HepG2 (cell line): ENCODE measurements at regions of chr17 and their contacts with region 1.

Region 1: GRCh38 chr17:74659898-74660297 is 36.4 kb upstream of the CD300E start:
- DNase-seq: no peak
- ATAC-seq: no peak
- H3K4me3 ChIP-seq: no peak overlapping the region
- H3K27ac ChIP-seq: no peak overlapping the region
- H3K4me1 ChIP-seq: no peaks in the 10 kb centered on the region
- H3K27me3 ChIP-seq: peaks cover 0 to 20% of the 10 kb centered on the region in 2 experiments; a peak in 3 of 5 replicates
- CTCF ChIP-seq: no peak
- EP300 ChIP-seq: no peak
- POLR2A ChIP-seq: no peak
- RAD21 ChIP-seq: no peak

Region 2: GRCh38 chr17:74671031-74671771 is 11.3 kb after region 1 on chr17:
- CTCF ChIA-PET with region 1: no interaction called
- POLR2A ChIA-PET with region 1: no interaction called
- in situ Hi-C with region 1: no loop called
- intact Hi-C with region 1: no loop called
- DNase-seq: peak; percentile 67
- ATAC-seq: peak; percentile 98
- H3K4me3 ChIP-seq: no peak overlapping the region
- H3K27ac ChIP-seq: no peak overlapping the region
- H3K4me1 ChIP-seq: no peaks in the 10 kb centered on the region
- H3K27me3 ChIP-seq: peaks cover 0 to 5% of the 10 kb centered on the region in 2 experiments; a peak in 2 of 5 replicates
- CTCF ChIP-seq: peak; percentile 46
- EP300 ChIP-seq: peak in 1 of 2 experiments; percentile 33; a peak in 1 of 4 replicates
- POLR2A ChIP-seq: no peak
- RAD21 ChIP-seq: peak; percentile 74

Region 3: GRCh38 chr17:74736513-74737298 is 76.8 kb after region 1 on chr17 and contains the start of gene RAB37:
- CTCF ChIA-PET with region 1: interaction called, 22 read pairs
- POLR2A ChIA-PET with region 1: interaction called, 25 read pairs
- in situ Hi-C with region 1: loop called (anchors 5 kb)
- intact Hi-C with region 1: loop called (anchors 1 kb)
- DNase-seq: peak; percentile 99
- ATAC-seq: peak; percentile 82
- H3K4me3 ChIP-seq: peak within 1 kb of the TSS; percentile 39 to 78 (median 67)
- H3K27ac ChIP-seq: peak within 1 kb of the TSS; percentile 69
- H3K4me1 ChIP-seq: peaks cover 59% of the 10 kb centered on the region
- H3K27me3 ChIP-seq: peaks cover 8 to 37% of the 10 kb centered on the region in 2 experiments; a peak in 4 of 5 replicates
- CTCF ChIP-seq: peak; percentile 81
- EP300 ChIP-seq: peak; percentile 85 to 87
- POLR2A ChIP-seq: peak; percentile 42 to 71
- RAD21 ChIP-seq: peak; percentile 87
- total RNA-seq, gene RAB37: 0.91 and 1.1 TPM in 2 replicates

Region 4: GRCh38 chr17:74770498-74771318 is 110.8 kb after region 1 on chr17:
- CTCF ChIA-PET with region 1: interaction called, 10 read pairs
- POLR2A ChIA-PET with region 1: no interaction called
- in situ Hi-C with region 1: no loop called
- intact Hi-C with region 1: no loop called
- DNase-seq: peak; percentile 81
- ATAC-seq: peak; percentile 78
- H3K4me3 ChIP-seq: no peak overlapping the region
- H3K27ac ChIP-seq: peak overlapping the region; percentile 52
- H3K4me1 ChIP-seq: peaks cover 94% of the 10 kb centered on the region
- H3K27me3 ChIP-seq: no peaks in the 10 kb centered on the region; a peak in 1 of 5 replicates
- CTCF ChIP-seq: peak; percentile 99
- EP300 ChIP-seq: peak in 1 of 2 experiments; percentile 28; a peak in 1 of 4 replicates
- POLR2A ChIP-seq: peak in 1 of 2 experiments; percentile 55; a peak in 2 of 4 replicates
- RAD21 ChIP-seq: peak; percentile 99

Region 5: DNA sequence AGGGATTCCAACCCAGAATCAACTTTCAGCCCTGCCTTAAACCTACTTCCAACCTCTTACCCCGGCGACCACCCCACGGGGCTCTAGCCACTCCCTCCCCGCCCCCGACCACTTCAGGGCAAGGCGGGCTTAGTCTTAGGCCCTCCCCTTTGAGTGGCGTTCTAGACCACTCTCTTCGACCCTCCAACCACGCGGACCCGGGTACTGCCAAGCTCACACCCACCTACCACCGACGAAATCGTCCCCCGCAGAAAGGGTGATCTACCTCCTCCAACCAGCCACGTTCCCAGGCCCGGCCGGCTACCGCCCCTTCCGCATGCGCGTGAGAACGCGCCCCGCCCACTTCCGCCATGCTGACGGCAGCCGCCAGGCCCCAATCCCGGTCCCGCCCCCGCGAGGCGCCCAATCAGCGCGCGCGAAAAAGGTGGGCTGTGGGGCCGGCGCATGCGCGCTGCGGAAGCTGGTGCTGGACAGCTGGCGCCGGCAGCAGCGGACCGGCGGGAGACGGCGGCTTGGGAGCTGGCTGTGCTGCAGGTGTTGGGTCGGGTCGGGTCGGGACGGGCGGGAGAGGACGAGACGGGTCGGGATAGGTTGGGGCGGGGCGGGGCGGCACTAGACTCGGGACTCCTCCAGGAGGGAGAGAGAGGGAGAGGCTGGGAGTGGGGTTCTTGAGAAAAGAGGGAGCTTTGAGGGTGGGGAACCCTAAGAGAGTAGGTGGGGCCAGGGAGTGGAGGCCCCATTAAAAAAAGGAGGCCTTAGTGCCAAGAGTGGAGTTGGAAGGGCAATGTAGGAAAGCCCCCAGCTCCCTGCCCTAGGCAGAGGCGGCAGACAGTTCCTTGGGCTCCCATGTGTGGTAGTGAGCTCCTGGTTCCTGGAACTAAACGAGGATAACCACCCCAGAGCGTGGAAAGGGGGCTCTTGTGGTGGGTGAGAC is 116.4 kb after region 1 on chr17 and contains the start of gene NAT9:
- CTCF ChIA-PET with region 1: interaction called, 21 read pairs
- POLR2A ChIA-PET with region 1: interaction called, 3 read pairs
- in situ Hi-C with region 1: loop called (anchors 5 kb)
- intact Hi-C with region 1: loop called (anchors 1 kb)
- DNase-seq: peak; percentile 94
- ATAC-seq: peak; percentile 74
- H3K4me3 ChIP-seq: peak within 1 kb of the TSS; percentile 83 to 95 (median 94)
- H3K27ac ChIP-seq: peak within 1 kb of the TSS; percentile 71
- H3K4me1 ChIP-seq: peaks cover 52% of the 10 kb centered on the region
- H3K27me3 ChIP-seq: no peaks in the 10 kb centered on the region; a peak in 1 of 5 replicates
- CTCF ChIP-seq: 0 out of 2 replicates have a peak, but pooled peaks have one; percentile 6
- EP300 ChIP-seq: 0 out of 4 replicates have a peak, but pooled peaks of 1 of the 2 experiments have one; percentile 43
- POLR2A ChIP-seq: peak; percentile 76 to 92
- RAD21 ChIP-seq: no peak; the same call in 1 of the 2 replicates
- total RNA-seq, gene NAT9: 37.6 and 44.2 TPM in 2 replicates

Region 6: DNA sequence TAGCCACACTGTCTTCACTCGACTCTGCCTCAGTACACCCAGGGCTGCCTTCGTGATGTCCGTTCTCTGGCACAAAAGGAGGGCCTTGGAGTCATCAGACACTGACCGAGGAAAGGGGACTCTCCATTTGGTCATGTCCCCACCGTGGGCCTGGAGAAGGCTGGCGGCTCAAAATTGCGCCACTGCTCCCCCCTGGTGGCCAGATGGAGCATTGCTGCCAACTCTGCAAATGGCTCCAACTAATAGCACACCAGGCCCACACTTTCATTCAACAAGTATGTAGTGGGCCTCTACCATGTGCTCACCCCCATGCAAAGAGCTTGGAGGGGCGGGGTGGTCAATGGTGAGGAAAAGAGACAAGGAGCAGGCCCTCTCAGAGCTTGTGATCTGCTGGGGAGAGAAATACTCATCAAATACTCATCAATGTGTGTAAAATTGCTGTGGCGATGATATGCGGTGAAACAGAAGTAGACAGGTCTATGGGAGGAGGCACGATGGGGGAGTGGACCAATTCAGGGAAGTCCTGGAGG is 205.0 kb after region 1 on chr17:
- CTCF ChIA-PET with region 1: interaction called, 6 read pairs
- POLR2A ChIA-PET with region 1: no interaction called
- in situ Hi-C with region 1: no loop called
- intact Hi-C with region 1: loop called (anchors 10 kb)
- DNase-seq: peak; percentile 56
- ATAC-seq: peak; percentile 56
- H3K4me3 ChIP-seq: no peak overlapping the region
- H3K27ac ChIP-seq: no peak overlapping the region
- H3K4me1 ChIP-seq: peaks cover 58% of the 10 kb centered on the region
- H3K27me3 ChIP-seq: peaks cover 2 to 13% of the 10 kb centered on the region in 2 experiments; a peak in 3 of 5 replicates
- CTCF ChIP-seq: peak; percentile 98
- EP300 ChIP-seq: no peak
- POLR2A ChIP-seq: no peak
- RAD21 ChIP-seq: peak; percentile 81